ENCODE measurements at regions of chr5 and their contacts with region 1.

Region 1: GRCh38 chr5:98425640-98426039 is 347.8 kb upstream of the RGMB start:
- DNase-seq: no peak
- ATAC-seq: no peak
- H3K4me3 ChIP-seq: no peak overlapping the region
- H3K4me3 Mint-ChIP-seq: no peak overlapping the region
- H3K27ac ChIP-seq: no peak overlapping the region
- H3K27ac Mint-ChIP-seq: no peak overlapping the region
- H3K4me1 ChIP-seq: no peaks in the 10 kb centered on the region
- H3K4me1 Mint-ChIP-seq: no peaks in the 10 kb centered on the region
- H3K27me3 ChIP-seq: no peaks in the 10 kb centered on the region
- H3K27me3 Mint-ChIP-seq: no peaks in the 10 kb centered on the region
- CTCF ChIP-seq: no peak

Region 2: DNA sequence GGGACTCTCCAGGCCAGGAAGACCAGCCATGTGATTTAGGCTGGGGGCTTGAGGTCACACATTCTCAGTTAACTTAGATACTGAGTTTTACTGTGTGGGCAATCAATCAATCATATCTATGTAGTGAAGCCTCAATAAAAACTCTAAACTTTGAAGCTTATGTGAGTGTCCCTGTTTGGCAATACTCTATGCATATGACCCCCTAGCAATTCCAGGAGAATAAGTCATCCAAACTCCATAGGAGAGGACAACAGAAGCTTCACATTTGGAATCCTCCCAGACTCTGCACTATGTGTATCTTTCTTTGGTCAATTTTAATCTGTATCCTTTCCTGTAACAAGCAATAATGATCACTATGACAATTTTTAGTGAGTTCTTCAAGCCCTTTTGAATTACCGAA is 131.1 kb after region 1 on chr5:
- CTCF ChIA-PET with region 1: no interaction called
- POLR2A ChIA-PET with region 1: no interaction called
- intact Hi-C with region 1: loop called in 1 of 2 experiments (anchors 1 kb)
- DNase-seq: no peak
- ATAC-seq: no peak
- H3K4me3 ChIP-seq: no peak overlapping the region
- H3K4me3 Mint-ChIP-seq: no peak overlapping the region
- H3K27ac ChIP-seq: no peak overlapping the region
- H3K27ac Mint-ChIP-seq: no peak overlapping the region
- H3K4me1 ChIP-seq: no peaks in the 10 kb centered on the region
- H3K4me1 Mint-ChIP-seq: no peaks in the 10 kb centered on the region
- H3K27me3 ChIP-seq: no peaks in the 10 kb centered on the region
- H3K27me3 Mint-ChIP-seq: no peaks in the 10 kb centered on the region
- CTCF ChIP-seq: no peak